ENCODE measurements at regions of chr6 and their contacts with region 1.

Region 1: DNA sequence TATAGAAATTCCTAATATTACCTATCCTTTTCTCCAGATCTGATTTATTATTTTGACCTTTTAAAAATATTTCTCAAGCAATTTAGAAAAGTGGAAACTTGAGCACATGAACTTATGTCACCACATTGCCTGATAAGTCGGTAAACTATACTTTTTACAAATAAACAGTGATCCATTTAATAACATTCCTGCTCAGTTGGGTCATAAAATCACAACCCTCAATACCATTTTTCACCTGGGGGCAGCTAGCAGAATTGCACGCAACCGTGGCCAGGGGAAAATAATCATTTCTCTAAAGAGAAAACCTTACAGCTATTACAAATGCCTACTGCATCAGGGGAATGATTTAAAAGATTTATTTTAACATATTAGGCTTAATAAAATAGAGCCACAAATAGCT is 614.5 kb downstream of the PHF3 start:
- H3K4me3 ChIP-seq: no peak overlapping the region
- H3K27ac ChIP-seq: no peak overlapping the region
- H3K4me1 ChIP-seq: no peaks in the 10 kb centered on the region
- CTCF ChIP-seq: no peak

Region 2: GRCh38 chr6:64266351-64266821 is 16.3 kb after region 1 on chr6:
- CTCF ChIA-PET with region 1: interaction called, 12 read pairs
- POLR2A ChIA-PET with region 1: no interaction called
- H3K4me3 ChIP-seq: no peak overlapping the region
- H3K27ac ChIP-seq: no peak overlapping the region
- H3K4me1 ChIP-seq: no peaks in the 10 kb centered on the region
- CTCF ChIP-seq: no peak